A549 (cell line): ENCODE measurements at regions of chr11 and their contacts with region 1.

Region 1: GRCh38 chr11:18775492-18776292 is 15.9 kb downstream of the PTPN5 start:
- DNase-seq: peak; percentile 65 to 76
- ATAC-seq: peak; percentile 91 to 97
- H3K4me3 ChIP-seq: no peak overlapping the region
- H3K27ac ChIP-seq: no peak overlapping the region
- H3K4me1 ChIP-seq: no peaks in the 10 kb centered on the region
- CTCF ChIP-seq: peak; percentile 80
- EP300 ChIP-seq: no peak
- POLR2A ChIP-seq: no peak
- RAD21 ChIP-seq: peak; percentile 65 to 80

Region 2: DNA sequence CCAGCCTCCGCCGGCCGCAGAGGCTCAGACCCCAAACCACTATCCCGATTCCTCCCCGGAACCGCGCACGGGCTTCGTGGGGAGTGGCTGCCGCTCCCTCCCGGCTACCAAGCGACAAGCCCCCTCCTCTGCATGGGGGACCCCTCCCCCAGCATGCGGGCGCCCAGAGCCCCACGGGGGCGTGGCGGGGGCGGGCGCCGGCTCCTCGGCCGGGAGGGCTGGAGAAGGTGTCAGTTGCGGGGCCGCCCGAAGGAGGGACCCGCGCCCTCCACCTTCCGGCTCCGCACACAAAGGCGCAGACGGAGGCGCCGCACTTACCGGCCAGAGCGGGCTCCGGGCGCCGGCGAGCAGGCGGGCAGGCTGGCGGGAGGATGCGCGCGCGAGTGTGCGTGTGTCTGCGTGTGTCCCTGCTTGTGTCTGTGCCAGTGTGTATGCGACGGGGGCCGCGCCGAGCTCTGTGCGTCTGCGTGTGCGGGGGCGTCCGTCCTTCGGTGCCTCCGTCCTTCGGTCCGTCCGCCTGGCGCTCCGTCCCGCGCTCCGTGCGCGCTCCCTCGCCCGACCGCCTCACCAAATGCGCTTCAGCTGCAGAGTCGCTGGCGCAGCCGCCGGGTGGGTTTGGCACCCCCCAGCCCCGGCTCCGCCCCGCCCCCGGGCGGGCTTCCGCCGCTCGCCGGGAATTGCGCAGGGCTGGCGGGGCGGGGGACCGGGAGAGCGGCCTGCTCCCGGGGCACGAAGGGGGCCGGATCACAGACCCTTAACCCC is 15.7 kb after region 1 on chr11 and contains the start of gene PTPN5:
- CTCF ChIA-PET with region 1: interaction called, 182 read pairs
- POLR2A ChIA-PET with region 1: no interaction called
- DNase-seq: peak in 1 of 2 experiments; percentile 34
- ATAC-seq: peak; percentile 32 to 68; a peak in 3 of 6 replicates
- H3K4me3 ChIP-seq: peak within 1 kb of the TSS; percentile 54
- H3K27ac ChIP-seq: peak within 1 kb of the TSS in 1 of 2 experiments; percentile 17; a peak in 1 of 6 replicates
- H3K4me1 ChIP-seq: peaks cover 5% of the 10 kb centered on the region; the same call in 1 of the 3 replicates
- CTCF ChIP-seq: no peak
- EP300 ChIP-seq: no peak
- POLR2A ChIP-seq: no peak
- RAD21 ChIP-seq: no peak
- polyA plus RNA-seq, gene PTPN5: 0.04 TPM in 1 of 2 replicates, not detected in the other

Region 3: GRCh38 chr11:18802381-18803257 is 26.9 kb after region 1 on chr11:
- CTCF ChIA-PET with region 1: interaction called, 182 read pairs
- POLR2A ChIA-PET with region 1: no interaction called
- DNase-seq: peak; percentile 66 to 82
- ATAC-seq: peak; percentile 68 to 83; a peak in 5 of 6 replicates
- H3K4me3 ChIP-seq: no peak overlapping the region
- H3K27ac ChIP-seq: no peak overlapping the region
- H3K4me1 ChIP-seq: no peaks in the 10 kb centered on the region
- CTCF ChIP-seq: peak; percentile 81; the same call in 2 of the 3 replicates
- EP300 ChIP-seq: no peak
- POLR2A ChIP-seq: no peak
- RAD21 ChIP-seq: peak; percentile 65 to 74

Region 4: GRCh38 chr11:18853086-18853720 is 77.5 kb after region 1 on chr11:
- CTCF ChIA-PET with region 1: interaction called, 17 read pairs
- POLR2A ChIA-PET with region 1: no interaction called
- DNase-seq: peak; percentile 10 to 57
- ATAC-seq: peak; percentile 89 to 93
- H3K4me3 ChIP-seq: no peak overlapping the region
- H3K27ac ChIP-seq: no peak overlapping the region
- H3K4me1 ChIP-seq: no peaks in the 10 kb centered on the region
- CTCF ChIP-seq: peak; percentile 58
- EP300 ChIP-seq: no peak
- POLR2A ChIP-seq: no peak
- RAD21 ChIP-seq: peak; percentile 63 to 75

Region 5: DNA sequence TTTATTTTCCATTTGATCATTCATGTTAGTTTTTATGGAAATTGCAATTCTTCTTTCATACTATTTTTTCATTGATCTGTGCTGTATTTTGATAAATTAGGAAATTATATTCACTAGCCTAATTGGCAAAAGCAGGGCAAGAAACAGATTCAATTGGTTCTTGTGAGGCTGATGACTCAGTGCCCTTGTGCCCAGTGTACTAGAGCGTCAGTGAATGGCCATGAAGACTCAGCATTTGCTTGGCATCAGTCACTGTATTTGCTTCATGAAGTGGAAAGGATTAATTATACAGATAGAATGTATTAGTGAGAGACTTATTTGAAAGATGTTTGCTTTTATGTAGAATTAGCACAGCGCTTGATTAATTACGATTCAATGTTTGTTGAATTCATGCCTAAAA is 131.7 kb after region 1 on chr11:
- CTCF ChIA-PET with region 1: no interaction called
- POLR2A ChIA-PET with region 1: no interaction called
- DNase-seq: no peak
- ATAC-seq: no peak
- H3K4me3 ChIP-seq: no peak overlapping the region
- H3K27ac ChIP-seq: no peak overlapping the region
- H3K4me1 ChIP-seq: no peaks in the 10 kb centered on the region
- CTCF ChIP-seq: no peak
- EP300 ChIP-seq: no peak
- POLR2A ChIP-seq: no peak
- RAD21 ChIP-seq: no peak